PC-3 (cell line): ENCODE measurements at regions of chr1 and their contacts with region 1.

Region 1: GRCh38 chr1:241531195-241532161 is 700 bp upstream of the KMO start:
- DNase-seq: peak; percentile 97
- ATAC-seq: peak; percentile 91
- H3K4me3 ChIP-seq: peak overlapping the region; percentile 69
- H3K27ac ChIP-seq: peak overlapping the region; percentile 47
- H3K4me1 ChIP-seq: peaks cover 29% of the 10 kb centered on the region
- H3K27me3 ChIP-seq: no peaks in the 10 kb centered on the region
- CTCF ChIP-seq: peak; percentile 96

Region 2: DNA sequence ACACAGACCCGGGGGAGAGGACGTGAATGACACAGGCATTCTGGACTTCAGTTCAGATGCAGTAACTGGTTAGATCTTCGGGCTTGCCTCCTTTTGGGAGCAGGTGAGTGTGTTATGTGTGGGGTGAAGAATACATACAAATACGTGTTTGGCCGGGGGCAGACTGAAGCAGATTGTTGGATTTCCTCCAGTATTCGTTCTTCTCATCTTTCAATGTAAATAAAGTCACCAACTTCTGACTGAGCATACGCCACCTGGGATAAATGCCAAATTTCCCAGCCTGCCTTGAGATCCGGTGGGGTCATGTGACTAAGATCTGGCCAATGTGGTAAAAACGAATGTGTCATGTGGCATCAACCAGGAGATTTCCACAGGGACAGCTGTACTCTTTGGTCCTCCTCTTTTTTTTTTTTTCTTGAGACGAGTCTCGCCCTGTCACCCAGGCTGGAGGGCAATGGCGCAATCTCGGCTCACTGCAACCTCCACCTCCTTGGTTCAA is 364.3 kb before region 1 on chr1:
- CTCF ChIA-PET with region 1: no interaction called
- POLR2A ChIA-PET with region 1: no interaction called
- intact Hi-C with region 1: no loop called
- DNase-seq: peak; percentile 91
- ATAC-seq: peak; percentile 40
- H3K4me3 ChIP-seq: no peak overlapping the region
- H3K27ac ChIP-seq: no peak overlapping the region
- H3K4me1 ChIP-seq: no peaks in the 10 kb centered on the region
- H3K27me3 ChIP-seq: peaks cover 63% of the 10 kb centered on the region
- CTCF ChIP-seq: no peak

Region 3: GRCh38 chr1:241356519-241357365 is 174.7 kb before region 1 on chr1 and contains the start of gene RGS7:
- CTCF ChIA-PET with region 1: no interaction called
- POLR2A ChIA-PET with region 1: no interaction called
- intact Hi-C with region 1: no loop called
- DNase-seq: no peak
- ATAC-seq: peak; percentile 21; the same call in 1 of the 2 replicates
- H3K4me3 ChIP-seq: no peak within 1 kb of the TSS
- H3K27ac ChIP-seq: no peak within 1 kb of the TSS
- H3K4me1 ChIP-seq: no peaks in the 10 kb centered on the region
- H3K27me3 ChIP-seq: peaks cover 56% of the 10 kb centered on the region
- CTCF ChIP-seq: no peak
- total RNA-seq, gene RGS7: 0.15 and 0.29 TPM in 2 replicates

Region 4: GRCh38 chr1:241592273-241592958 is 60.9 kb after region 1 on chr1:
- CTCF ChIA-PET with region 1: interaction called, 3 read pairs
- POLR2A ChIA-PET with region 1: no interaction called
- intact Hi-C with region 1: loop called (anchors 1 kb)
- DNase-seq: peak; percentile 100
- ATAC-seq: peak; percentile 82
- H3K4me3 ChIP-seq: peak overlapping the region; percentile 20
- H3K27ac ChIP-seq: peak overlapping the region; percentile 89
- H3K4me1 ChIP-seq: peaks cover 43% of the 10 kb centered on the region
- H3K27me3 ChIP-seq: no peaks in the 10 kb centered on the region
- CTCF ChIP-seq: no peak

Region 5: DNA sequence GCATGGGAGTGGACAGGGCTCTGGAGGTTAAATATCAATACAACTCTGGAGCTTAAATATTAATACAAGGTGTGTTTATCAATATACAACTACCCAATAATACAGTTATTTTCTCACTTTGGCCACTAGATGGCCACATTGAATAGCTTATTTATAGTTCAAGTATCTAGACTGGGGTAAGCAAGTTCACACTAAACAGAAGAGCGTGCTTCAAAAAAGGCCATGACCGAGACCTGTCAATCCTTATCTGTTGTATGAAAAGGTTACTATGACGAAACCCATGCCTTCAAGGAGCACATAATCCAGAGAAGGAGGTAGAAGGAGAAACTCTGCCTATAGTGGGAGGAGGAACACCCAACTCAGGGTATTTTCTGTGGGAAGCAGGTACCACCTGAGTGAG is 79.6 kb after region 1 on chr1:
- CTCF ChIA-PET with region 1: interaction called, 5 read pairs
- POLR2A ChIA-PET with region 1: no interaction called
- intact Hi-C with region 1: loop called (anchors 1 kb)
- DNase-seq: peak; percentile 96
- ATAC-seq: peak; percentile 7
- H3K4me3 ChIP-seq: no peak overlapping the region
- H3K27ac ChIP-seq: peak overlapping the region; percentile 85
- H3K4me1 ChIP-seq: peaks cover 94% of the 10 kb centered on the region
- H3K27me3 ChIP-seq: no peaks in the 10 kb centered on the region
- CTCF ChIP-seq: peak; percentile 97

Region 6: DNA sequence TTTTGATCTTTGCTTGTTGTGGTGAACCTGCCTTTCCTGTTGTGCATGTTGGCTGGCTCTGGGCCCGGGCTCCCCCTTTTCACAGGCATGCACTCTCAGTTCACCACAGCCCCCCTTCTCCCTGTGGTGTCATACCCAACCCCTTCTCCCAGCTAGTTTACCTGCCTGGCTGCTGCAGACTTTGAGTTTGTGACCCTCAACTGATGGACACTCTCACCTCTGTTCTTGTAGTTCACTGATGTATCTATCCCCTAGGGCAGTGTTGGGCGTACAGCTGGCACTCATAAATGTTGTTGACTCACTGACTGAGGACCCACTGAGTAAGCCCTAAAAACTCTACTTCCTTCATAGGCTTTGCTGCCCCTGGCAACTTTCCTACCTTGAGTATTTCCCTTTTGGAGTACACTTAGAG is 175.5 kb after region 1 on chr1:
- CTCF ChIA-PET with region 1: no interaction called
- POLR2A ChIA-PET with region 1: no interaction called
- intact Hi-C with region 1: loop called (anchors 5 kb)
- DNase-seq: peak; percentile 100
- ATAC-seq: peak; percentile 84
- H3K4me3 ChIP-seq: peak overlapping the region; percentile 1; the same call in 1 of the 2 replicates
- H3K27ac ChIP-seq: peak overlapping the region; percentile 82
- H3K4me1 ChIP-seq: peaks cover 51% of the 10 kb centered on the region
- H3K27me3 ChIP-seq: no peaks in the 10 kb centered on the region
- CTCF ChIP-seq: no peak

Region 7: DNA sequence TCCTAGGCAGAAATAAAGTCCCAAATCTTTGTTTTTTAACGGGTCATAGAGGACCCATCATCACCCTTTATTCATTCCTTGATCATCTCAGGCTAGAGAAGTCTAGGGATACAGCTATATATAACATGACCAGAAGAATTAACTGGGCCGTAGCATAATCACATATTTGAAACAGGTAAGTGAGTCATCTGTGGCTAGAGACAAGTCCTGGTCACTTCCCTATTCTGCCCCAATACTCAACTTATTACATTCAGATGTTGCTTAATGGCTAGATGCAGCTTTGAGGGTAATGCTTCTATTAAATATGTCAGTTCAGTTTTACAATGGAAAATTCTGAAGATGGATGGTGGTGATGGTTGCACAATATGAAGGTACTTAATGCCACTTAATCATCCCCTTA is 363.5 kb after region 1 on chr1:
- CTCF ChIA-PET with region 1: no interaction called
- POLR2A ChIA-PET with region 1: no interaction called
- intact Hi-C with region 1: loop called (anchors 5 kb)
- DNase-seq: peak; percentile 71
- ATAC-seq: peak; percentile 86
- H3K4me3 ChIP-seq: no peak overlapping the region
- H3K27ac ChIP-seq: no peak overlapping the region
- H3K4me1 ChIP-seq: peaks cover 14% of the 10 kb centered on the region
- H3K27me3 ChIP-seq: no peaks in the 10 kb centered on the region
- CTCF ChIP-seq: no peak

Region 8: GRCh38 chr1:242017584-242018233 is 486.2 kb after region 1 on chr1:
- CTCF ChIA-PET with region 1: no interaction called
- POLR2A ChIA-PET with region 1: no interaction called
- intact Hi-C with region 1: loop called (anchors 5 kb)
- DNase-seq: peak; percentile 84
- ATAC-seq: peak; percentile 42
- H3K4me3 ChIP-seq: no peak overlapping the region
- H3K27ac ChIP-seq: no peak overlapping the region
- H3K4me1 ChIP-seq: no peaks in the 10 kb centered on the region
- H3K27me3 ChIP-seq: no peaks in the 10 kb centered on the region
- CTCF ChIP-seq: peak; percentile 75